Heart left ventricle (tissue), 16 donors: ENCODE measurements at regions of chr11 and their contacts with region 1.

Region 1: GRCh38 chr11:86919557-86920210 is 35.5 kb downstream of the FZD4 start:
- DNase-seq: peak in 1 of 5 donors; percentile 43
- ATAC-seq: peak in 3 of 4 donors; percentile 66 to 69 (median 68)
- H3K4me3 ChIP-seq: no peak overlapping the region
- H3K27ac ChIP-seq: peak overlapping the region in 11 of 12 donors; percentile 30 to 90 (median 79)
- H3K4me1 ChIP-seq: peaks cover 0 to 61% (median 31%) of the 10 kb centered on the region in 12 donors
- H3K27me3 ChIP-seq: no peaks in the 10 kb centered on the region
- CTCF ChIP-seq: peak; percentile 47 to 77 (median 66)
- POLR2A ChIP-seq: no peak

Region 2: DNA sequence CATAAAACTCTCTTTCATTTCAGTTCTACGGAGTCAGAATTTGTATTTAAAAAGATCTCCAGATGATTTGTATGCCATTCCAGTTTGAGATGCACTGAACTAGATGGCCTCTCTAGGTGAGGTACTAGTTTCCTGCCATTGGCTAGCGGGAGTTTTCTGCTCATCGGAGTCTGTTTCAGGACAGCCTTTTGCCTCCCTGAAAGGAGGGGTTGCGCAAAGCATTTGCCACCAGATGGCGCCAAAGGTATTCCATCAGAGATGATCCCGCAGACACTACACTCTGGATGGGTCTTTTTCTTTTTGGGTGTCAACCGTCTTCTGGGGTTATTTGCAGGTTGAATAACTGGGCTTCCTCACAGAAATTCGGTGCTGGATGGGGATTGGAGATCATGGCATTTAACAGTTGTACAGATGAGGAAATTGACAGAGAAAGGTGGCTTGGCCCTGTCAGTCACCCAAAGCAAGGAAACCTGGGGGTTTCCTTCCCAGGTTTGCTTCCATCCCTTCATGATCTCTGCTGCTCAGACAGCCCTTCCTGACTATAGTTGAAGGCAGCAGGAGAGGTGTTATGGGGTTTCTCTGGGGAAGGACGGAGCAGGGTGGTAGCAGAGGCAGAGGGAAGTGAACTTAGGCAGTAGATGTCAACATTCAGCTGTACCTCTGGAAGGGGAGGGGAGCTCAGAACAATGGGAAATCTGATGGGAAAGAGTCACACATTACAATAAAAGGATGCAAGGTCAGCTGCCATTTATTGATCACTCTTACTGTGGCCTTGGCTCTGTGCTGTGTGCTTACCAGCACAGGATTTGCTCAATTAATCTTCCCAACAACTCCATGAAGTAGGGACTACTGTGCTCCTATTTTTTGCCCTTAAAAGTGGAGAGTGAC is 463.4 kb before region 1 on chr11:
- intact Hi-C with region 1: loop called in 4 of 10 experiments (anchors 5 to 10 kb)
- DNase-seq: peak; percentile 82 to 86 (median 85)
- ATAC-seq: peak; percentile 47 to 83 (median 78)
- H3K4me3 ChIP-seq: no peak overlapping the region
- H3K27ac ChIP-seq: peak overlapping the region in 6 of 12 donors; percentile 20 to 61 (median 39)
- H3K4me1 ChIP-seq: peaks cover 3 to 55% (median 37%) of the 10 kb centered on the region in 12 donors
- H3K27me3 ChIP-seq: no peaks in the 10 kb centered on the region
- CTCF ChIP-seq: peak; percentile 83 to 97 (median 91)
- POLR2A ChIP-seq: no peak

Region 3: GRCh38 chr11:86955361-86956120 is 35.9 kb after region 1 on chr11 and contains the start of gene FZD4:
- intact Hi-C with region 1: no loop called
- DNase-seq: peak; percentile 94 to 95 (median 95)
- ATAC-seq: peak; percentile 88 to 95 (median 91)
- H3K4me3 ChIP-seq: peak within 1 kb of the TSS; percentile 84 to 100 (median 94)
- H3K27ac ChIP-seq: peak within 1 kb of the TSS; percentile 93 to 100 (median 98)
- H3K4me1 ChIP-seq: peaks cover 4 to 55% (median 33%) of the 10 kb centered on the region in 12 donors
- H3K27me3 ChIP-seq: peaks cover 0 to 14% (median 0%) of the 10 kb centered on the region in 9 donors
- CTCF ChIP-seq: peak in 11 of 12 donors; percentile 7 to 76 (median 45)
- POLR2A ChIP-seq: peak in 1 of 2 donors; percentile 52
- total RNA-seq, gene FZD4: 16.7 to 39.6 (median 22.1) TPM